Tibial artery (tissue), 4 donors: ENCODE measurements at regions of chr4 and their contacts with region 1.

Region 1: DNA sequence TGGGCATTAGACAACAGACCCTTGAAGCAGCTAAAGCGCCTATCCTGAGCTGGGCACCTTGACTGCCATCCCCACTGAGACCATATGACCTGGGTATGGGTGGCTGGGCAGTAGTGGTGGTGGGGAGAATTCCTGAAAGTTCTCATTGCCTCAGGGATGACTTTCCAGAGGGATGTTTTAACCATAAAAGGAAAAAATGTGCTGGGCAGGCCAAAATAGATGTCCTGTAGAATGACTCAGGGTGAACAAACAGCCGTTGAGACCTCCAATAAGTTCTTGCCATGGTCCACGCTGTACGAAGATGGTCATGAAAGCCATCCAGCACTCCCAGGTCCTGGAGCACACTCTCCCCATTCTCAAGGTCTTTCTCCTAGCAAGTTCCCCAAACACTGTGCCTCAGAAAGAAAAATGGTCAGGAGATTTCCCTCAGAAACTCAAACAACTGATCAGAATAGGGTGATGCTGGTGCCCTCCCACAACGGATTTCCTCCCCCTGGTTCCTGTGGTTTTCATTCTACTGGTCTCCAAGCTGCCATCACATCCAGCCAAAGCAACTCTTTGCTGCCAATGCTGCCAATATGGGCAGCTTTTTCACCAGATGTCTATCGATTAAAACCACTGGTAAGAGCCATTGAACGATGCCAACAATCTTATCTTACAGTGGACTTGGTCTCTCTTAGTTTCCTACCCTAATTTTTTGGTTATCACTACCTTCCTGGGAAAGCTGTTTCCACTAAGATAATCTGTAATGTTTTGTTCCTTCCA is 11.2 kb downstream of the CDKN2AIP start:
- DNase-seq: no peak
- H3K4me3 ChIP-seq: no peak overlapping the region
- H3K27ac ChIP-seq: no peak overlapping the region
- H3K4me1 ChIP-seq: peaks cover 0 to 7% (median 0%) of the 10 kb centered on the region in 4 donors
- H3K27me3 ChIP-seq: no peaks in the 10 kb centered on the region
- CTCF ChIP-seq: no peak

Region 2: DNA sequence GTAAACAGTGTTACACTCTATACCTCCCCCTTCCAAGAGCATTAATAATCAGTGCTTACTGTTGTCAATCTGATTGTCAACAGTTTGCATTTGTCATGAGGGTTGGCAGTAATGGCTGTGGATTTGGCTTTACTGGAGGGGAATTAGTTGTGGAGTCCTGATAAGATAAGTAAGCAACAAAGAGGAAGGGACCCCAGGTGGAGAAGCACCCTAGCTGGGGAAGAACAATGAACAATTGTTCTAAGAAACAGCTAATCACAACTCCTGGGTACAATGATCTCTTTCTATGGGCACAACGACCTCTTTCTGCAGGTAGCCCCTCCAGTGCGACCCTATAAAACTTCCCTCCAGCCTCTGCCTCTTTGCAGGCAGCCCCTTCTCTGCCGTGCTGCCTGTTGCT is 64.4 kb before region 1 on chr4:
- intact Hi-C with region 1: no loop called
- DNase-seq: no peak
- H3K4me3 ChIP-seq: no peak overlapping the region
- H3K27ac ChIP-seq: no peak overlapping the region
- H3K4me1 ChIP-seq: no peaks in the 10 kb centered on the region
- H3K27me3 ChIP-seq: peaks cover 0 to 16% of the 10 kb centered on the region in 2 donors
- CTCF ChIP-seq: no peak

Region 3: DNA sequence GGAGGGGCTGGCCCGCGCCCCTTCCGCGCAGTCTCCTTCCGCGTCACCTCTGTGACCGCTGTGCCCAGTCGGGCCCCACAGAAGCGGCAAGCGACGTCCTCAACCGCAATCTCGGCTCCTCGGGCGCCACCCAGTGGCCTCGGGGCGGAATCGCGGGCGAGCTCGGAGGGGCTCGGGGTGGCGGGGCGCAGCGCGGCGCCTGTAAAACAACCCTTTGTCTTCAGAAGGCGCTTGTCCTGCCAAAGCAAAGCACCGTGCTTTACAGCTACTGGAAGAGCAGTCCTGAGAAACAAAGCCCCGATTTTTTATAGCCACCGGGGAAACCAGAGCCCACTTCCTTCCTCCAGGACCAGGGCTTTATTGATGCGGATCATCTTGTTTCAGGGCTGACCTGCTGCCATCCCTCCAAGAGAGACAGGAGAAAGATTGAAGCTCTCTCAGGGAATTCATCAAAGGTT is 48.5 kb before region 1 on chr4:
- intact Hi-C with region 1: loop called (anchors 2 kb)
- DNase-seq: peak; percentile 81 to 84
- H3K4me3 ChIP-seq: peak overlapping the region; percentile 35 to 49
- H3K27ac ChIP-seq: peak overlapping the region in 1 of 2 donors; percentile 17
- H3K4me1 ChIP-seq: no peaks in the 10 kb centered on the region
- H3K27me3 ChIP-seq: no peaks in the 10 kb centered on the region
- CTCF ChIP-seq: peak; percentile 74 to 97